ENCODE measurements at regions of chr2 and their contacts with region 1.

Region 1: DNA sequence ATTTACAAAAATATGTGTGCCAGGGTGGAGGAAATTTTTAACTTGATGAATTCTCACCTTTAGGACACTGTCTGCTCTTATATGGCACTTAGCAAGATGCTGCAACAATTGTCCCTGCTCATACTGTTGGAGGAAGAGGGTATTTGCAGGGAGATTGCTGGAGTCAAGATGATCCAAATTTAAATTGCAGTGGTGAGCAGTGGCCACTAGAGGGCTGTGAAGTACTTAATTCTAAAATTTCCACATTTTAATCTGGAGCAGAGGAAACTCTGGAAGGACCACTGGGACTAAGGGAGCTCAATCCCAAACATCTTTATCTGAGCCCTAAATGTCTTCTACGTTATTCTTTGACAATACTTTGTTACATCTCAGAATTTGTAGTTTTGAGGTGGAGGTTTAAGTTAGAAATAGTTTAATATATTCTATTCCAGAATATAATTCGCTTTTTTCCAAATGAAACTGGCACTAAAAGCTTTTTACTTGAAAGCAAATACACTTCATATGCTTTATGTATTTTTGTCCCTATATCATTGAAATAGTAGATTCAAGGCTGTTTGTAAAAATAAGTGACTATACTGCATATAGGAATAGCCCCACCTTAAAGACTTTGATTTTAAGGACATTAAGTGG is 33.0 kb upstream of the PTH2R start:
- DNase-seq: peak; percentile 57
- ATAC-seq: peak; percentile 74
- H3K4me3 Mint-ChIP-seq: no peak overlapping the region
- H3K27ac Mint-ChIP-seq: no peak overlapping the region
- H3K4me1 Mint-ChIP-seq: peaks cover 26% of the 10 kb centered on the region
- H3K27me3 Mint-ChIP-seq: peaks cover 3% of the 10 kb centered on the region; the same call in 1 of the 2 replicates
- CTCF ChIP-seq: peak; percentile 74; the same call in 1 of the 2 replicates

Region 2: GRCh38 chr2:208320686-208321085 is 52.9 kb before region 1 on chr2:
- CTCF ChIA-PET with region 1: no interaction called
- POLR2A ChIA-PET with region 1: no interaction called
- DNase-seq: no peak
- ATAC-seq: no peak
- H3K4me3 Mint-ChIP-seq: no peak overlapping the region
- H3K27ac Mint-ChIP-seq: no peak overlapping the region
- H3K4me1 Mint-ChIP-seq: no peaks in the 10 kb centered on the region
- H3K27me3 Mint-ChIP-seq: no peaks in the 10 kb centered on the region
- CTCF ChIP-seq: no peak

Region 3: GRCh38 chr2:208392300-208393080 is 18.9 kb after region 1 on chr2:
- CTCF ChIA-PET with region 1: interaction called, 13 read pairs
- POLR2A ChIA-PET with region 1: no interaction called
- DNase-seq: no peak
- ATAC-seq: no peak
- H3K4me3 Mint-ChIP-seq: no peak overlapping the region
- H3K27ac Mint-ChIP-seq: no peak overlapping the region
- H3K4me1 Mint-ChIP-seq: no peaks in the 10 kb centered on the region
- H3K27me3 Mint-ChIP-seq: no peaks in the 10 kb centered on the region; the same call in 1 of the 2 replicates
- CTCF ChIP-seq: no peak